Astrocyte of the cerebellum (primary cell): ENCODE measurements at regions of chr14 and their contacts with region 1.

Region 1: DNA sequence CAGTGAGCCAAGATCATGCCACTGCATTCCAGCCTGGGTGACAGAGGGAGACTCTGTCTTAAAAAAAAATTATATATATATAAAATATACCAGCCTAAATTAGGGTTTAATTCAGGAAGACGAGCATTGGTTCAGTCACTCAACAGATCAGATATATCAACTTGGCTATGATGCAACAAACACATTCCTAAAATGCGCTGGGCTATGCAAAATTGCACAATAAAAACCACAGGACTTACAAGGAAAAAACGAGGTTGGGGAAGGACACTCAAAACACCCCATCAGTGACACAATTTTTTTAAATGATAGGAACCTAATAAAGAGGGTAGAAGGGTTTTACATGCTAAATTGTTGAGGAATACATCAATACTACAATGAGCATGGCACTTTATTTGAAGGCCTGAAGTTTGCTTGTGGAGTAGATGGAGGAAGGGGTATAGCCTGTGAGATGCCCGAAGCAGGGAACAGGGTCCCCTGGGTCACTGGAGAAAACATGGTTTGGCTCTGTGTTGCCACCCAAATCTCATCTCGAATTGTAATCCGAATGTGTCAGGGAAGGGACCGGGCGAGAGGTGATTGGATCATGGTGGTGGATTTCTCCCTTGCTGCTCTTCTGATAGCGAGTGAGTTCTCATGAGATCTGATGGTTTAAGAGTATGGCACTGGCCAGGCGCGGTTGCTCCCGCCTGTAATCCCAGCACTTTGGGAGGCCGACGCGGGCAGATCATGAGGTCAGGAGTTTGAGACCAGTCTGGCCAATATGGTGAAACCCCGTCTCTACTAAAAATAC is 71.2 kb downstream of the TNFAIP2 start:
- DNase-seq: peak; percentile 13
- H3K4me3 ChIP-seq: no peak overlapping the region
- CTCF ChIP-seq: no peak

Region 2: GRCh38 chr14:103155013-103155412 is 39.4 kb before region 1 on chr14:
- in situ Hi-C with region 1: loop called (anchors 5 kb)
- DNase-seq: no peak
- H3K4me3 ChIP-seq: no peak overlapping the region
- CTCF ChIP-seq: no peak

Region 3: GRCh38 chr14:103267226-103267910 is 72.9 kb after region 1 on chr14:
- in situ Hi-C with region 1: no loop called
- DNase-seq: no peak
- H3K4me3 ChIP-seq: no peak overlapping the region
- CTCF ChIP-seq: no peak